Activated CD8-positive, alpha-beta T cell treated with anti-CD3 and anti-CD28 coated beads, Interleukin-2, amount 10 ng/mL, durations not matched to agents 7 days and 5 days (primary cell): ENCODE measurements at regions of chr12 and their contacts with region 1.

Region 1: DNA sequence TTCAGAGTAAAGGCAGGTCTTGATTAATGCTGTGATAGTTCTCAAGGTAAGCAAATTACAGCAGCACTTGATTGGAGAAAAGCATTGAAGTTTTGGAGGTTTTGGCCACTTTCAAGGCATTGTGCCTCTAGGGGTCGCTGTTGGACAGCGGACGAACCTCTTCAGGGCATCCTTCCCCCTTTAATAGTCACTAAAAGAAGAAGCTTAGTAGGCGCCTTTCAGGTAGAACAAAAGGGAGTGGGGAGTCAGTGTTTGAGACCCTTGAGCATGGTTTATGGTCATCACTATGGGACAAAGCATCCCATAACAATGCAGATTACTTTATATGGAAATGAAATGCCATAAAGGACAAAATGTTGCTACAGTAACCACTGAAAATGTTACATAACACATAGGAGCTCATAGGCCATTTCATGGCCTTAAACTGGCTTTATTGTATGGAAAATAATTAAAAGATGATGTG is 199.5 kb upstream of the DCN start:
- DNase-seq: peak; percentile 87
- ATAC-seq: peak; percentile 88
- H3K4me3 Mint-ChIP-seq: peak overlapping the region; percentile 66
- H3K27ac Mint-ChIP-seq: no peak overlapping the region
- H3K4me1 Mint-ChIP-seq: peaks cover 9% of the 10 kb centered on the region
- H3K27me3 Mint-ChIP-seq: peaks cover 10% of the 10 kb centered on the region

Region 2: GRCh38 chr12:91364471-91365184 is 17.5 kb before region 1 on chr12:
- CTCF ChIA-PET with region 1: interaction called, 22 read pairs
- POLR2A ChIA-PET with region 1: no interaction called
- DNase-seq: no peak
- ATAC-seq: no peak
- H3K4me3 Mint-ChIP-seq: no peak overlapping the region
- H3K27ac Mint-ChIP-seq: no peak overlapping the region
- H3K4me1 Mint-ChIP-seq: no peaks in the 10 kb centered on the region
- H3K27me3 Mint-ChIP-seq: peaks cover 10% of the 10 kb centered on the region

Region 3: DNA sequence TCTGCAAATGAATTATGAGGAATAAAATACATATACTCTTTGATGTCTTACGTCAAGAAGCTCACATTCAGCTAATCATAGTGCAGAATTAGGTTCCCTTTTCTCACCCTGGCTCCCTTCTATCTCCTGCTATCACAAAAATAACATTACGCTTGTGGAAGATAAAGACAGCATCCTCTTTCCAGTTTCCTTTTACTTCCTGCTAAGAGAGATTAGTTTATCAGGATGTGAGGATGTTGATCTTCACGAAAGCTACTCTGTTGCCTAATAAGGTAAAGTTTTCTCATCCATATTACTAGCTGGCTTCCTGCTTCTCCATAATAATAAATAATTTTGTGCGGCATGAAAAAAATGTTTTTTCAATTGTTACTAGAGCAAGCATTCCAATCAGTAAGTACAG is 18.2 kb after region 1 on chr12:
- CTCF ChIA-PET with region 1: interaction called, 25 read pairs
- POLR2A ChIA-PET with region 1: interaction called, 4 read pairs
- DNase-seq: no peak
- ATAC-seq: no peak
- H3K4me3 Mint-ChIP-seq: no peak overlapping the region
- H3K27ac Mint-ChIP-seq: no peak overlapping the region
- H3K4me1 Mint-ChIP-seq: peaks cover 20% of the 10 kb centered on the region
- H3K27me3 Mint-ChIP-seq: no peaks in the 10 kb centered on the region

Region 4: DNA sequence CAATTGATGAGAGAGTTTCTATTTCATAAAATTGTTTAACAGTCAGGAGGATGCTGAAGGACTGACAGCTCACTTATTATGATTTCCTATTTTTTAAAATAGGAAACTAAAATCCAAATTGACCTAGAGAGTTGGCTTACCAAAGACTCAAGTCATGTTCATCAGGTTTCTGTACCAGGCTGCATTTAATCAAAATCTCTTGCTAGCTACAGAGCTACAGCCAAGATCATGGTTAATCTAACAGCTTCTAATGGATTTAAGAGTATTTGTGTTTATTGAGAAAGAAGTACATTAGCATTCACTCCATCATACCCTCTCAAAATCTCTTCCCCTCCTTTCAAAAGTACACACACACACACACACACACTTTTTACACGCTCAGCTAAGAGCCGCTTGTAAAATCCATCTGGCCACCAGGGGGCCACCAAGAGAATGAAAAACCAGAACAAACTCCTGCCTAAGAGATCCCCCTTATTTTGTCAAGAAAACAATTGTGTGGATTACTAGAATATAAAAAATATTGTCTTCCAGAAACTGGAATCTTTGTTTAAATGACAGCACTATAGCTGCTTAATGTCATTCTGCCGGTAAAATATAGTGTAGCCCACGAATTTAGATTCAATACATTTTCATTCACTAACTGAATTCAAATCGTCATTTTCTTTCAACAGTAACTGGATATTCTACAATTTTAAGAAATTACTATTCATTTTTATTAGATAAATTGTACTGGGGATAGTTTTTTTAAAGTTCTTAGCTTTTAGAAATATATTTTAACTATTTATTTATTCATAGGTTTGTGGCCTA is 429.6 kb after region 1 on chr12:
- CTCF ChIA-PET with region 1: interaction called, 21 read pairs
- POLR2A ChIA-PET with region 1: no interaction called
- DNase-seq: peak; percentile 72
- ATAC-seq: peak; percentile 44
- H3K4me3 Mint-ChIP-seq: no peak overlapping the region
- H3K27ac Mint-ChIP-seq: no peak overlapping the region
- H3K4me1 Mint-ChIP-seq: peaks cover 11% of the 10 kb centered on the region
- H3K27me3 Mint-ChIP-seq: no peaks in the 10 kb centered on the region

Region 5: DNA sequence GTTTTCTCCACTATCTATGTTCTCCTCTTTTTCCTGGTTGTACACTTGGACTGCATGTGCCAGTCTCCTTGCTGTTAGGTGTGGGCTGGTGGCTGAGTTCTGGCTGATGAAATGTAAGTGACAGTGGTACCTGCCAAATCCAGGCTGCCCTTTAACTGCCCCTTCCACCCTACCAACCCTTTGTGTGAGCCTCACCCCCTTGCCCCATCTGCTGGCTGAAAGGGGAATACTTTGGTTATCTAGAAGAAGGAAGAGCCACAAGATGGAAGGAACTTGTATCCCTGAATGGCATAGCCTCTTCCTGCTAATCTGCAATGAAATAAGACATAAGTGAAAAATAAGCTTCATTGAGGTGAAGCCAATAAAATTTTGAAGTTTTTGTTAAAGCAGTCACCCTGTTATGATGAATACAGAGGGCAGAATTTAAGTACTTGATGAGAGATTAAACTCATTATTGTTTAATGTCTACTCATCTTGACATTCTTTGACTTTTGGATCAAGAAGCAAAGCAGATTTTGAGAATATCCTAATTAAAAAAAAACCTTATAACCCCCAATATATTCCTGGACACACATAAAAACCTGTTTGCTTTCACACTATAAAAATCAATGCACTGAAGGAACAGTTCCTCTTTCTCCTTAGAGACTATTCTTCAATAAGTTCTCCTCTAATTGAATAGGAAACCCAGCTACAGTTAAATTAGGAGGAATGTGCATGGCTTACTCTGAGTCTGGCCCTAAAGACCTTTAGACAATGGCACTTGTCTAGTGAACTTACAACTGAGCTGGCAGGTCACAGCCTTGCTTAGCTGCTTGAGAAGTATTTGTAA is 1026.2 kb after region 1 on chr12:
- CTCF ChIA-PET with region 1: interaction called, 27 read pairs
- POLR2A ChIA-PET with region 1: no interaction called
- DNase-seq: peak; percentile 74
- ATAC-seq: peak; percentile 24
- H3K4me3 Mint-ChIP-seq: no peak overlapping the region
- H3K27ac Mint-ChIP-seq: no peak overlapping the region
- H3K4me1 Mint-ChIP-seq: peaks cover 46% of the 10 kb centered on the region
- H3K27me3 Mint-ChIP-seq: no peaks in the 10 kb centered on the region

Region 6: DNA sequence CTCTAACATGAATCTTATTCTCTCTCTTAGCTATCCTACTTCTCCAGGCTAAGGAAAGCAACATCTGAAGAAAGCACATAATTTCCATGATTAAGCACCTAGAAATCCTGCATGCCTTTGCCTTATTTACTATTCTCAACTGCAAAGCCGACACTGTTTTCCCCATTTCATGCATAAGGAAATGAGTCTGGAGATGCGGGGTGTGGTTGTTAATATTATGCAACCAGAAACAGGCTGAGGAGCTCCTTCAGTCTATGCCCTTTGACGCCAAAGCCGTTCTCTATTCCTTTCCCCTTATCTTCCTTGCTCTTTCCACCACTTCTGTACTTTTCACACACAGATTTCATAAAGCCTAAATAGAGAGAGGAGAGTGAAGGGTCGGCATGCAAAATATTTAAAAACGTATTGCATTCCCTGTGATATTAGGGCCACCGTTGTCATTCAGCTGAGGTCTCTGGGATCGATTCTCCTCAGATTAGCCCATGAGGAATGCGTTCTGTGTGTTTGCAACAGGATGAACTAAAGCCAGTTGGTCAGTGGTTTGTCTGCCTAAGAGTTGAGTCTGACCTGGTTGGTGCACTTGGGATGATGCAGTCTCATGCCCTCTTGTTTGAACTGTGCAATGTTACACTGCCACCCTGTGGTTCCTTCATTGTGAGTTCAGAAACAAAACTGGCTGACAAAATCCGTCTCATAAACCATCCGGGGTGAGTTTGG is 1267.6 kb after region 1 on chr12:
- CTCF ChIA-PET with region 1: interaction called, 29 read pairs
- POLR2A ChIA-PET with region 1: no interaction called
- DNase-seq: peak; percentile 72
- ATAC-seq: peak; percentile 84
- H3K4me3 Mint-ChIP-seq: no peak overlapping the region
- H3K27ac Mint-ChIP-seq: no peak overlapping the region
- H3K4me1 Mint-ChIP-seq: no peaks in the 10 kb centered on the region
- H3K27me3 Mint-ChIP-seq: no peaks in the 10 kb centered on the region